AG04449 (cell line): ENCODE measurements at regions of chr2 and their contacts with region 1.

Region 1: GRCh38 chr2:218395797-218396687 is 3.6 kb upstream of the CTDSP1 start:
- DNase-seq: peak; percentile 90
- H3K4me3 ChIP-seq: peak overlapping the region; percentile 78
- CTCF ChIP-seq: peak; percentile 86

Region 2: GRCh38 chr2:218269899-218270720 is 125.9 kb before region 1 on chr2 and contains the starts of genes AAMP and PNKD:
- CTCF ChIA-PET with region 1: interaction called, 83 read pairs
- POLR2A ChIA-PET with region 1: interaction called, 6 read pairs
- DNase-seq: peak; percentile 94
- H3K4me3 ChIP-seq: peak within 1 kb of the TSS; percentile 97
- CTCF ChIP-seq: peak; percentile 18

Region 3: DNA sequence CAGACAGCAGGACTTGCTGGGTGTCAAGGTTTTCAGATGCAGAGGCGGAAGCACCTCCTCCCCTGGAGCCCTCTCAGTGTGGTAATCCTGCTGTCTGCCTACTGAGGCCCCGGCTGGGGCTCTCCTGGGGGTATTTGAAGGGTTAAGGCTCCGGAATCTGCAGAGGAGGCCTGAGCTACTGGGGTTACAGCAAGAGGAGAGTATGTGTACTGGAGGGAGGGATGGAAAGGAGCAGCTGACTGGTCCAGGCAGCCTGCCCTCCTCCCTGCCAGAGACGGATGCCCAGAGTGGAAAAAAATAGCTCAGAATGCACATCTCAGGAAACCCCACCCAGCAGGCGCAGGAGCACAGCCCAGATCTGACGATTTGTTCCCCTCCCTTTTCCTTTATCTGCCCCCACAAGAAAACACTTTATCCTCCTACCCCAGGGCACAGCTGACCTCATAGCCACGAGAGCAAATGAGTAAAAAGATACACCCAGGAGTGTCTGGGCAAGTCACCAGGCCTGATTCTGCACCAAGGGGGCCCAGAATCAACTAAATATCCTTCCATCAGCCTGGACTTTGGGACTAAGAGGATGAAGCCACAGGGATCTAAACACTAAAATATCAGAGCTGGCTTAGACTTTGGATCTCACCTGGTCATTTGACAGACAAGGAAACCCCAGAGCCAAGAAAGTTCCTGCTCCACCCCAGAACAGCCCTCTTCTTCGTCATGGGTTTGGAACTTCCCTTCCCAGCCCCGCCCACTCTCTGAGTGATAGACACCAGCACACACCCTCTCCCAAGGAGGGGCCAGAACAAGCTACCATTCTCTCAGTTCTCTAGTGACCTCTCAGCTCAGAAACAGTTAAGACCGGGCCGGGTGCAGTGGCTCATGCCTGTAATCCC is 109.2 kb before region 1 on chr2:
- CTCF ChIA-PET with region 1: interaction called, 34 read pairs
- POLR2A ChIA-PET with region 1: no interaction called
- DNase-seq: peak; percentile 90
- H3K4me3 ChIP-seq: peak overlapping the region; percentile 56
- CTCF ChIP-seq: no peak

Region 4: DNA sequence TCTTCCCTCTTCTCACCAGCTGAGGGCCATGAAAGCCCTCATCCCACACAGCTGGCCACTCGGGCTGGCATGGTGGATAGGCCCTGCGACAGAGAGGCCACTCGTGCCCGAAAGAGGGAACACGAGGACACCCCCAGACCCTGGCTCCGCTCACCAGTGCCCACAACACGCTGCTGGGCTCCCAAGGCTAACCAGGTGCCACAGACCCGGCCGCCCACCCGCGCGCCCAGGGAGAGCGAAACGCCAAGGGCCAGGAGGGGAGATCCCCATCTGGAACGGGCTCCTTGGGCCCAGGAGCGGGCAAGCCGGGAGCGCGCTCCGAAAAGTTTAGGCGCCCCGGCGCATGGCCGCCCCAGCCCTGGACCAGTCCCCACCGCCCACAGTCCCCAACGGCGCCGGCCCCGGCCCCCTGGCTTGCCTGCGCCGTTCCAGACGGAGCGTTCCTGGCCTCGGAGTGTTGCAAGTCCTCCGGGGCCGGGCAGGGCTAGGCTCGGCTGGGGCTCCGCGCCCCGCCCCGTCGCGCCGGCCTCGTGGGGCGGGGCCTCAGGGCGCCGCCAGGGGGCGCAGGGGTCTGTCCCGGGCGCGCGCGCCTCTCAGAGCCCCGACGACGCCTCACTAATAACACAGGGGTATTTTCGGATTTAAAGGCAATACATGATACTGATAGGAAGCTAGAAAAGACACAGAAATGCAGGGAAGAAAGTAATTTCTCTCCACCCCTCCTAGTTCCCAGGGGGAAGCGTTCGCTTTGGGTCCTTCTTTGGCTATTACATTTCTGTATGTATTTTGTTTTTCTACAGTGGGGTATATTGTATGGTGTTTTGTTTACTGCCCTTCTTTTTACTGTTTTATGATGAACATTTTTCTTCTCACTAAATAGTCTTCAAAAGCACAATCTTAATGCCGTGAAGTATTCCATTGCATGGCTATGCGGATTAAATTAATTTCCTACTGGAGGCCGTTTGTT is 103.7 kb before region 1 on chr2 and contains the start of gene TMBIM1:
- CTCF ChIA-PET with region 1: interaction called, 34 read pairs
- POLR2A ChIA-PET with region 1: no interaction called
- DNase-seq: no peak
- H3K4me3 ChIP-seq: peak within 1 kb of the TSS; percentile 85
- CTCF ChIP-seq: peak; percentile 64

Region 5: GRCh38 chr2:218301176-218301819 is 94.7 kb before region 1 on chr2:
- CTCF ChIA-PET with region 1: interaction called, 67 read pairs
- POLR2A ChIA-PET with region 1: no interaction called
- DNase-seq: no peak
- H3K4me3 ChIP-seq: no peak overlapping the region
- CTCF ChIP-seq: peak; percentile 88

Region 6: DNA sequence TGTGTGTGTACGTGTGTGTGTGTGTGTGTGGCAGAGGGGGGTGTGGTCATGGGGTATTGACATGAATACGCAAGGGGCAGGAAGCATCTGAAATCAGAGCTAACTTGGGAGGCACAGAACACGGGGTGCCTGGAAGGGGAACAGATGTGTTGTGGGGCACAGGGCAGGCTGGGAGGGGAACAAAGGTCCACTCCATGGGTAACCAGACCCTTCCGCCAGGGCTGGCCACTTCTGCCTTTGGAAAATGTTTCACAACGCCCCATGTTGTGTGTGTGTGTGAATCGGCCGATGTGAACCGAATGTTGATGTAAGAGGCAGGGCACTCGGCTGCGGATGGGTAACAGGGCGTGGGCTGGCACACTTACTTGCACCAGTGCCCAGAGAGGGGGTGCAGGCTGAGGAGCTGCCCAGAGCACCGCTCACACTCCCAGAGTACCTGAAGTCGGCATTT is 14.1 kb before region 1 on chr2 and contains the start of gene SLC11A1:
- CTCF ChIA-PET with region 1: interaction called, 20 read pairs
- POLR2A ChIA-PET with region 1: interaction called, 6 read pairs
- DNase-seq: no peak
- H3K4me3 ChIP-seq: no peak within 1 kb of the TSS
- CTCF ChIP-seq: no peak

Region 7: DNA sequence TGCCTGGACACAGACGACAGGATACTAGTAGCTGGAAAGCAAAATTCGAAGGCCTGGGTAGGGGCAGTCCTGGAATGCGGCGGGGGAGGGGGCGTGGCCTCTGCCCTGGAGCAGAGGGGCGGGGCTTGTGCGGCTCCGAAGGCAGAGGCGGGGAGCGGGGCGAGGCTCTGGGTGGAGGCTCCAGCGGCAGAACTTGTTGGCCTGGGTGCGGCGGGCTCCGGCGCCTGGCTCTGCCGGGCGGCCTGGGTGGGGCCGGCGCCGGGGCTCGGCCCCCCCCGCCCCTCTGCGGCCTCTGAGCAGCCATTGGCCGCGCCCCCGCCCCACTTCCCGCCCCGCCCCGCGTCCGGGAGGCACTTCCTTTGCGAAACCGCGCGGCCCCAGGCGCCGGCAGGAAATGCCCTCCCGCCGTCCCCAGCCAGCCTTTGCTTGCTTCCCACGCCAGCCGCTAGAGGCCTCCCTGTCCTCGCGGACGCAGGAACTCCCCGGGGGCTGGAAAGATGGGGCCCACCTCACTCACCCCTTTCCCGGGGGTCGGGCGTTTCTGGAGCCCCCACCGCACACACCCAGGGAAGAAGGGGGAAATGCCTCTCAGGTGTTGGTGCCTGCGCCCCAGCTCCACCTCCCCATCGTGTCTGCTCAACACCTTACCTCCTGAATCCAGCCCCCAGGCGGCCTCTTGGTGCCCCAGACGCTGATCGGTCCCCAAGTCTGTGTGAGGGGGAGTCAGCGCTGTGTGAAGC is 10.3 kb after region 1 on chr2:
- CTCF ChIA-PET with region 1: interaction called, 23 read pairs
- POLR2A ChIA-PET with region 1: interaction called, 11 read pairs
- DNase-seq: peak; percentile 57
- H3K4me3 ChIP-seq: peak overlapping the region; percentile 54
- CTCF ChIP-seq: peak; percentile 95